ENCODE measurements at regions of chr12 and their contacts with region 1.

Region 1: DNA sequence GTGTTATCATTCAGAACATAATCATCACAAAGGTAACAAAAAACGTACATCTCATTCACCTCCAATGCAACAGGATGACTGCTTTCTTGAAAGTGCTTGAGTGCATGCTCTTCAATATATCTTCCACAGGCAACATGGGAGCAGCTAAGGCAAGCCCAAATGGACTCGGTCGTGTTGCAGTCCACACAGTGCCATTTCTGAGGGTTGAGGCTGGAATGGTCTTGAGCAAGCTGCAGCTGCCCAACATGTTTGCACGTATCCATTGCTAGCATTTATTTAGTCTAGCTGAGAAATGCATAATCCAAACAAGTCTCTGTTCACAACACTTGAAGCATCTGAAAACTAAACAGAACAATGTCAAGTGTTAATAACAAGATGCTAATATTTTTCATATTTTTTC is 17.3 kb downstream of the USP44 start:
- DNase-seq: no peak
- H3K4me3 ChIP-seq: no peak overlapping the region
- H3K27ac ChIP-seq: no peak overlapping the region; the same call in 1 of the 2 replicates
- H3K4me1 ChIP-seq: peaks cover 0 to 19% (median 14%) of the 10 kb centered on the region in 4 experiments; a peak in 4 of 7 replicates
- H3K27me3 ChIP-seq: no peaks in the 10 kb centered on the region
- CTCF ChIP-seq: no peak
- EP300 ChIP-seq: no peak
- POLR2A ChIP-seq: no peak
- RAD21 ChIP-seq: no peak

Region 2: DNA sequence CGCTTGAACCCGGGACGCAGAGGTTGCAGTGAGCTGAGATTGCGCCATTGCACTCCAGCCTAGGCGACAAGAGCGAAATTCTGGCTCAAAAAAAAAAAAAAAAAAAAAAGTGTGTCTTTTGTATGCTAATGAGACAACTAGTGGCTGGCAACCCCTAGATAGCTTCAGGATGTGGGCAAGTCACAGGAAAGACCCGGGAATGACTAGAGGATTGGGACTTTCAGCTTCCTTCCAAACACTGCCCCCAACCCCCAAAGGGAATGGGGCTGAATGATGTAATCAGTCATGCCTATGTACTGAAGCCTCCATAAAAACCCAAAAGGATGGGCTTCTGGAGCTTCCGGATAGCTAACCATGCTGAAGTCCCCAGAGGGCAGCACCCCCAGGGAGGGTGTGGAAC is 11.3 kb before region 1 on chr12:
- CTCF ChIA-PET with region 1: interaction called, 7 read pairs
- POLR2A ChIA-PET with region 1: interaction called, 17 read pairs
- DNase-seq: no peak
- H3K4me3 ChIP-seq: no peak overlapping the region
- H3K27ac ChIP-seq: no peak overlapping the region; the same call in 1 of the 2 replicates
- H3K4me1 ChIP-seq: peaks cover 0 to 5% (median under 1%) of the 10 kb centered on the region in 4 experiments; a peak in 1 of 7 replicates
- H3K27me3 ChIP-seq: no peaks in the 10 kb centered on the region
- CTCF ChIP-seq: no peak
- EP300 ChIP-seq: no peak
- POLR2A ChIP-seq: no peak
- RAD21 ChIP-seq: no peak

Region 3: DNA sequence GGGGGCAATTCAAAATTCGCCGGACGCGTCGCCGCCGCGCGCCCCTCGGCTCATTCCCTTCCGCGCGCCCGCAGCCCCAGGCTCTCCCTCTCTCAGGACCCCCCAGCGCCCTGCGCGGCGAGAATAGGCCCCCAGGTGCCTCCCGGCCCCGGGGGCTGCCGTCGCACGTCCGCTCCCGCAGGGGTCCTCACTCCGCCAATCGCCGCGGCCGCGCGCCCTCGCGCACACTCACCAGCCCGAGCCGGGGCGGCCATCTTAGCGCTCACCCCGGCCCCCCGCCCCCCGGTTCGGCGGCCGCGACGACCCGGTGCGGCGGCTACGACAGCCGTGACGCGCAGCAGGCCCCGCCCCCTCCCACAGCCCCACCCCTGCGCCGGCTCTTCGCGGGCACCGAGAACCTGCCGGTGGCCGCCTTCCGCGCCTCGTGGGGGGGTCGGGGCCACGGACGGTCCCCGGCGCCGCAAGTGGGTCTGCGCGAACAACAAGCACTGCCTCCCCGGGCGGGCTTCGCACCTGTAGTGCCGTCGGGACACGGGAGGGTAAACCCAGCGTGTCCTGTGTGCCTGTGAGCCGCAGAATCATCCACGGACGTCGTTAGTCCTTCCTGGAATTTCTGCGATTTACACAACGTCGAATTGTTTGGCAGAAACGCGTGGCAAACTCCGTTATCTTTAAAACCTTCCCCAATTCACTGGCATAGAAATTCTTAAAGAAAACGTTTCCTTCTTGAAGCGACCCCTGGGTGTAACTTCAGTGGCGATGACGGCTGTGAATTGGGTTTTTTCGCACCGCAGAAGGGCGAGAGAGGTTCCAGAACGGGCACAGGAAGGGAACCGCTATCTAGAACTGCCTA is 14.8 kb after region 1 on chr12:
- CTCF ChIA-PET with region 1: interaction called, 9 read pairs
- POLR2A ChIA-PET with region 1: interaction called, 29 read pairs
- DNase-seq: peak in 1 of 2 experiments; percentile 83
- H3K4me3 ChIP-seq: peak overlapping the region; percentile 71 to 95 (median 88)
- H3K27ac ChIP-seq: peak overlapping the region; percentile 94
- H3K4me1 ChIP-seq: peaks cover 0 to 12% (median 6%) of the 10 kb centered on the region in 4 experiments; a peak in 5 of 7 replicates
- H3K27me3 ChIP-seq: no peaks in the 10 kb centered on the region
- CTCF ChIP-seq: no peak
- EP300 ChIP-seq: no peak
- POLR2A ChIP-seq: peak in 1 of 2 experiments; percentile 64; a peak in 2 of 3 replicates
- RAD21 ChIP-seq: no peak

Region 4: DNA sequence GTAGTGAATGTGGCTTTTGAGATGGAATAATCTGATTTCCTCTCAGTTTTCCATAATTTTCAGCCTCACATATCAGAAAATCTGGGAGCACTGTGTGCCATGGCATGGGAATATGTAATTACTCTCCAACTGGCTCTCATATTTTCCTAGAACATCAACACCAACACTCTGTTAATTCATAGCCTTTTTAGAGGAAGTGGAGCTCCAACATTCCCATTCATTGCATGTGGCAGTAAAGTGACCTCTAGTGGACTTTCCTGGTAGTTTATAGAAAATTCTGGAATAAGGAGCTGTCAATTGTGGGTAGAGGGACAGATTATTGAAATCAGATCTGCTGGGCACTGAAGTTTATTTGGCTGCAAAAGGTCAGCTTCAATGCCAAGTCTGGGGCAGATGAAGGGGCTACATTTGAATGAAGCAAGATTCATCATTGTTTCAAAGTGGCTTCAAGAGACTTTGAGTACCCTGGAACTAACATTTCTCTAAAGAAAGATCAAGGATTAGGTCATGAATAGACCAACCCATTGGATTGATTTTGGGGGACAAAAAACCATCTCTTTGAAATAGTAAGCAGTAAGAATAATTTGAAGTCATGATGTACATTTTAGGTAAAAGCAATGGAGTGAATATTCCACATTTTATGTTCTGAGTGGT is 40.9 kb after region 1 on chr12:
- CTCF ChIA-PET with region 1: interaction called, 17 read pairs
- POLR2A ChIA-PET with region 1: interaction called, 6 read pairs
- DNase-seq: no peak
- H3K4me3 ChIP-seq: peak overlapping the region in 1 of 4 experiments; percentile 49; a peak in 3 of 8 replicates
- H3K27ac ChIP-seq: peak overlapping the region; percentile 60
- H3K4me1 ChIP-seq: peaks cover 0 to 9% (median 8%) of the 10 kb centered on the region in 4 experiments; a peak in 4 of 7 replicates
- H3K27me3 ChIP-seq: no peaks in the 10 kb centered on the region
- CTCF ChIP-seq: peak in 2 of 3 experiments; percentile 62 to 74; a peak in 3 of 4 replicates
- EP300 ChIP-seq: no peak
- POLR2A ChIP-seq: no peak
- RAD21 ChIP-seq: peak; percentile 61 to 78

Measured in H1 (cell line).